Natural killer cell (primary cell): ENCODE measurements at regions of chrX and their contacts with region 1.

Region 1: GRCh38 chrX:54529552-54530357 is at the start of gene GNL3L:
- DNase-seq: peak; percentile 68 to 89
- ATAC-seq: peak; percentile 86 to 94 (median 88)
- H3K4me3 ChIP-seq: peak within 1 kb of the TSS; percentile 89
- H3K4me3 Mint-ChIP-seq: peak within 1 kb of the TSS; percentile 92
- H3K27ac ChIP-seq: peak within 1 kb of the TSS; percentile 95
- H3K27ac Mint-ChIP-seq: peak within 1 kb of the TSS; percentile 85 to 86
- H3K4me1 ChIP-seq: peaks cover 27% of the 10 kb centered on the region
- H3K4me1 Mint-ChIP-seq: peaks cover 26 to 27% of the 10 kb centered on the region in 2 donors
- H3K27me3 ChIP-seq: no peaks in the 10 kb centered on the region
- H3K27me3 Mint-ChIP-seq: no peaks in the 10 kb centered on the region
- CTCF ChIP-seq: no peak
- total RNA-seq, gene GNL3L: 44.5 to 50.0 (median 49.2) TPM

Region 2: GRCh38 chrX:54439967-54440871 is 89.5 kb before region 1 on chrX and contains the start of gene TSR2:
- intact Hi-C with region 1: loop called (anchors 10 kb)
- DNase-seq: peak; percentile 75 to 87
- ATAC-seq: peak; percentile 95 to 99 (median 97)
- H3K4me3 ChIP-seq: peak within 1 kb of the TSS; percentile 99
- H3K4me3 Mint-ChIP-seq: peak within 1 kb of the TSS; percentile 99
- H3K27ac ChIP-seq: peak within 1 kb of the TSS; percentile 73
- H3K27ac Mint-ChIP-seq: peak within 1 kb of the TSS; percentile 87 to 99
- H3K4me1 ChIP-seq: peaks cover 20% of the 10 kb centered on the region
- H3K4me1 Mint-ChIP-seq: peaks cover 14 to 37% of the 10 kb centered on the region in 2 donors
- H3K27me3 ChIP-seq: no peaks in the 10 kb centered on the region
- H3K27me3 Mint-ChIP-seq: peaks cover 3 to 16% of the 10 kb centered on the region in 2 donors
- CTCF ChIP-seq: no peak
- total RNA-seq, gene TSR2: 39.0 to 40.4 (median 40.0) TPM

Region 3: DNA sequence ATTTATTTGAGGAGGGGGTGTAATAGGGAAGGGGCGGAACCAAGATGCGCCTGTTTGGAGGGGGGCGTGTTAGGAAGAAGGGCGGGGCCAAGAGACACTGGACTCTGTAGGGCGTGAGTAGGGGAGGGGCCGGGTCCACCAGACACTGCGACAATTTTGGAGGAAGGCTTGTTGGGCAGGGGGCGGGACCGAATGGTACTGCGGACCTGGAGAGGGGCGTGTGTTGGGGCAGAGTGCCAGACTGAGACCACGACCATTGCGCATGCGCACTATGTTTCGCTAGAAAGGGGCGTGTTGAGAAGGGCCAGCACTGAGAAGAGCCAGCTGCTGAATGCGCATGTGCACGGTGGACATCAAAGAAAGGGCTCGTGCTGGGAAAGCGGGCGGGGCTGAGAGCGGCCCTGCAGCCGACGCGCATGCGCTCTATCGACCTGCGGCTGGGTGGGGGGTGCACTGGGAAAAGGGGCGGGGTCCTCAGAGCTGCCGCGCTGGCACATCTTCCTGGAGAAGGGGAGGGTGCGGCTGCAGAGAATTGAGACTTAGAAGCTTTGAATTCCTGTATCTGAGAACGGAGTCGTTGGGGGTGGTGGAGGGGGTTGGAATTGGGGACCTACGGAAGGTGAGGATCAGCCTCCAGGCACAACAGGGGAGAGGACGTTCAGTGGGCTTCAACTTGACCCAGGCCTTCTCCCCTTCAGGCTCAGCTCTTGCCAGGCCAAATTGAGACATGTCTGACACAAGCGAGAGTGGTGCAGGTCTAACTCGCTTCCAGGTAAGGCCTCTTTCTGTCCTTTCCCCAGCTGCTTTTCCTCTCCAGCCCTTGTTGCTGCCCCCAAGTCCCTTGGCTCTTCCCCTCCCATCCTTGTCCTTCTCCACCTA is 279.1 kb after region 1 on chrX:
- intact Hi-C with region 1: loop called (anchors 5 kb)
- DNase-seq: peak; percentile 75 to 96
- ATAC-seq: peak; percentile 81 to 89 (median 83)
- H3K4me3 ChIP-seq: peak overlapping the region; percentile 99
- H3K4me3 Mint-ChIP-seq: peak overlapping the region; percentile 88
- H3K27ac ChIP-seq: peak overlapping the region; percentile 92
- H3K27ac Mint-ChIP-seq: peak overlapping the region; percentile 86 to 95
- H3K4me1 ChIP-seq: peaks cover 20% of the 10 kb centered on the region
- H3K4me1 Mint-ChIP-seq: peaks cover 5 to 22% of the 10 kb centered on the region in 2 donors
- H3K27me3 ChIP-seq: no peaks in the 10 kb centered on the region
- H3K27me3 Mint-ChIP-seq: no peaks in the 10 kb centered on the region
- CTCF ChIP-seq: no peak